ENCODE measurements at regions of chr13 and their contacts with region 1.

Region 1: DNA sequence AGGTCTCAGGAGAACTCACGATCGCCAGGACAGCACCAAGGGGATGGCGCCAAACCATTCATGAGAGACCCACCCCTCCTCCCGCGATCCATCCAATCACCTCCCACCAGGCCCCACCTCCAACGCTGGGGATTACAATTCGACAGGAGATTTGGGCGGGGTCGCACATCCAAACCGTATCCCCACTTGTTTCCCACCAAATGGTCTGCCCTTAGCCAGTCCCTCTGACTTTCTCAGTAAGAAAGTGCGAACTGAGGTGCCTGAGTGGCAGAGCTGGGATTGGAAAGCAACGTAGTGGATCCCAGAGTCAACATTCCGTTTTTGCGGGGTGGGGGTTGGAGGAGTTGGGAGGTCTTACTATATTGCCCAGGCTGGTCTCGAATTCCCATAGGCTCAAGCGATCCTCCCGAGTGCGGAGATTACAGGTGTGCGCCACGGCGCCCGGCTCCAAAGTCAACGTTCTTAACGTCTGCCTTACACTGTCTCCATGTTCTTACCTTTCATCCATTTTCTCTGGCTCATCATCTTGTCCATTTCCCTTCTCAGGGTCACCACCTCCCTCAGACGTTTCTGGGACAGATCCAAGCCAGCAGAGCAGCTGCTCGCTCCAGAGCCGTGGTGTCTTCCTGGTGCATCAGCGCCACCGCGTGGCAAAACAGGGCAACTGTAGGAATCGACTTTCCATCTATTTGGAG is 102.7 kb upstream of the ABCC4 start:
- DNase-seq: peak; percentile 88
- H3K4me3 Mint-ChIP-seq: peak overlapping the region; percentile 53
- H3K27ac Mint-ChIP-seq: no peak overlapping the region
- H3K4me1 Mint-ChIP-seq: peaks cover 6% of the 10 kb centered on the region
- H3K27me3 Mint-ChIP-seq: no peaks in the 10 kb centered on the region
- CTCF ChIP-seq: peak; percentile 99

Region 2: GRCh38 chr13:94620286-94620896 is 783.6 kb before region 1 on chr13:
- CTCF ChIA-PET with region 1: interaction called, 18 read pairs
- POLR2A ChIA-PET with region 1: no interaction called
- intact Hi-C with region 1: loop called (anchors 1 kb)
- DNase-seq: peak; percentile 60
- H3K4me3 Mint-ChIP-seq: no peak overlapping the region
- H3K27ac Mint-ChIP-seq: no peak overlapping the region
- H3K4me1 Mint-ChIP-seq: no peaks in the 10 kb centered on the region
- H3K27me3 Mint-ChIP-seq: no peaks in the 10 kb centered on the region
- CTCF ChIP-seq: peak; percentile 69

Region 3: DNA sequence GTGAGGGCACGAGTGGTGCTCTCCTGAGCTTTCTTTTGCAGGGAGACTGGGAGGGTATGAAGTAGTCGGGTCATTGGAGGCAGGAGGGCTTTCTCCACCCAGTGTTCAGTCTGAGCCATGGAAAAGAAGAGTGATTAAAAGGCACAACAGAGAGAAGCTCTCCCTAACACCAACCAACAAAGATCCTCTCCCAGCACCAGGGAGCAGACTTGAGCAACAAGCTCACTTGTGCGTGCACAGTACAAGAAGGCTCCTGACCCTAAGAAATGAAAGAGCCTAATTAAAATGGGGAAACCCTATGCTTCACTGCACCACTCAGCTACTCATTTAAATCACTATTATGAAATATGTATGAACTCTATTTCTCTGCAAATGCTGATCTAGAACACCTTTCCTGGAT is 415.3 kb before region 1 on chr13:
- CTCF ChIA-PET with region 1: no interaction called
- POLR2A ChIA-PET with region 1: no interaction called
- intact Hi-C with region 1: no loop called
- DNase-seq: peak; percentile 18
- H3K4me3 Mint-ChIP-seq: no peak overlapping the region
- H3K27ac Mint-ChIP-seq: no peak overlapping the region
- H3K4me1 Mint-ChIP-seq: no peaks in the 10 kb centered on the region
- H3K27me3 Mint-ChIP-seq: peaks cover 13% of the 10 kb centered on the region
- CTCF ChIP-seq: no peak

Region 4: DNA sequence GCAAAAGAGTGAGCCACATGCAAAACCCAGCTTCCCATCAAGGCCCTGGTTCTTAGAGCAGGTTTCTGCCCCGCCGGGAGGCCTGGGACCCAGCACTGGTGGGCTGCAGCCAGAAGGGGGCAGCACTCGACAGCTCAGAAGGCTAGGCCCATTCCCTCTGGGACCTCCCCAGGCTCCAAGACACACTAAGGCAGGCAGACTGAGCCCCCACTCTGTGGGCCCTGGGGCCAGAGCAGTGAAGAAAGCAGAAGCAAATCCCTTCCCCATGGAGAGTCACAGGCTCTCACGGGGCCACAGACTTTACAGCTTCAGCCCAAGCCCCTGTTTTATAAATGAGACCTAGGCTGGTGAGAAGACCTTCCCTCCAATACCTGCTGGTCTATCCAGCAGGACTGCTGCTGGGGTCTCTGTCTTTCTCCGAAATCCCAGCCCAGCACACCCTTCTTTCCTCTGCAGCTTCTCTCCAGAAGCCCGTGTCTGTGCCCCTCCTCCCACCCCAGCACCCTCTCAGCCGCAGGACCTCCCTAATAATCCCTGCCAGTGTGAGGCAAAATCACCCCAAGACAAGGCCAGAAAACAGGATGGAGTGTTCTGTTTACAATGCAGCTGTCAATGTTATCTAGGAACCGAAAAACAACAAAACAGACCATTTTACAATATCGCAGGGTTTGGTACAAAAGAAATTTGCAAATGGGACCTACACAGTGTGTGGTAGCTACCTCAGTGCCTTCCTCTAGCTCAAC is 212.0 kb before region 1 on chr13:
- CTCF ChIA-PET with region 1: interaction called, 327 read pairs
- POLR2A ChIA-PET with region 1: interaction called, 11 read pairs
- intact Hi-C with region 1: loop called (anchors 1 kb)
- DNase-seq: peak; percentile 68
- H3K4me3 Mint-ChIP-seq: no peak overlapping the region
- H3K27ac Mint-ChIP-seq: no peak overlapping the region
- H3K4me1 Mint-ChIP-seq: no peaks in the 10 kb centered on the region
- H3K27me3 Mint-ChIP-seq: no peaks in the 10 kb centered on the region
- CTCF ChIP-seq: peak; percentile 68

Region 5: GRCh38 chr13:95367309-95367843 is 36.6 kb before region 1 on chr13:
- CTCF ChIA-PET with region 1: interaction called, 11 read pairs
- POLR2A ChIA-PET with region 1: no interaction called
- intact Hi-C with region 1: no loop called
- DNase-seq: no peak
- H3K4me3 Mint-ChIP-seq: no peak overlapping the region
- H3K27ac Mint-ChIP-seq: no peak overlapping the region
- H3K4me1 Mint-ChIP-seq: no peaks in the 10 kb centered on the region
- H3K27me3 Mint-ChIP-seq: peaks cover 1% of the 10 kb centered on the region
- CTCF ChIP-seq: no peak

Region 6: DNA sequence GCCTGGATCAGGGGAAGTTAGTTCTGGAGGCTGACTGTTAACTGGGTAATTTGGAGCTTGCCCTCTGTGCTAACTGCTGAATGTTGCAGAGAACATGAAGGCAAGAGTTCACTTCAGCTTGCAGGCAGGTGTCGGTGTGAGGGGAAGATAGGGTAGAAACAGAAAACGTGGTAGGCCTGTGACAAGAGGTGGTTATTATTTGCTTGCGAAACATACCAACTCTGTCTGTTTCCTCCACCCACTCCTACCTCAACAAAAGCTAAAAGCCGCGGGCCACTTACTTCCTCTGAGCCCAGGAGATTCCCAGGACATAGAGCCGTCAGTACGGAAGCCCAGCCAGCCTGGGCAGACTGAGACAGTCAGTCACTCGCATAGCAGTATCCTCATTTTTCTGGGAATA is 16.5 kb after region 1 on chr13:
- CTCF ChIA-PET with region 1: interaction called, 104 read pairs
- POLR2A ChIA-PET with region 1: interaction called, 5 read pairs
- intact Hi-C with region 1: no loop called
- DNase-seq: peak; percentile 64
- H3K4me3 Mint-ChIP-seq: no peak overlapping the region
- H3K27ac Mint-ChIP-seq: no peak overlapping the region
- H3K4me1 Mint-ChIP-seq: peaks cover 5% of the 10 kb centered on the region
- H3K27me3 Mint-ChIP-seq: no peaks in the 10 kb centered on the region
- CTCF ChIP-seq: no peak

Region 7: DNA sequence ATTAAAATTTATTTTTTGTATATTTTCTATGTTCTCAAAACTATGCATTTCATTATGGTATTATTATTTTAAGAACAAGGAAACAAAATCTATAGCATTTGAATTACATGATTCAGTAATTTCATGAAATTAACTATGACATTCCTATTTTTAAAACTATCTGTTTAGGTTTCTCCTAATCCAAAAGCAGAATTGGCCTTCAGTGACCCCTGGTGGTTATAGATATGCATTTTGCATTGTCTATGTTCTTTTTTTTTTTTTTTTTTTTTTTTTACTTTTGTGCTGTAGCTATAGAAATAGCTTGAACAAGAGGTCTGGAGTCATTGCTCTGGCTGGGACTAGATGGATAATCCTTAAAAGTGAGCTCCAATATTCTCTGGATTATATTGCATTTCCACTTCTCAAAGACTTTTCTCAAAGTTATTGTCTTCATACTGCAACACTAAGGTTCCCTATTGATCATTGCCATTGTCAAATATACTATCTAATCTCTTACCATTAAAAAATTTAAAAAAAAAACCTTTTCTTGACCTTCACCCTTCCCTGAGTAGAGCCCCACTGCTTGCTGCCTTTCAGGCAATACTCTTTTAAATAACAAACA is 257.1 kb after region 1 on chr13:
- CTCF ChIA-PET with region 1: interaction called, 16 read pairs
- POLR2A ChIA-PET with region 1: no interaction called
- intact Hi-C with region 1: no loop called
- DNase-seq: peak; percentile 88
- H3K4me3 Mint-ChIP-seq: no peak overlapping the region
- H3K27ac Mint-ChIP-seq: no peak overlapping the region
- H3K4me1 Mint-ChIP-seq: no peaks in the 10 kb centered on the region
- H3K27me3 Mint-ChIP-seq: no peaks in the 10 kb centered on the region
- CTCF ChIP-seq: peak; percentile 59

Region 8: GRCh38 chr13:97109841-97110492 is 1706.0 kb after region 1 on chr13:
- CTCF ChIA-PET with region 1: interaction called, 8 read pairs
- POLR2A ChIA-PET with region 1: no interaction called
- intact Hi-C with region 1: loop called (anchors 5 kb)
- DNase-seq: peak; percentile 88
- H3K4me3 Mint-ChIP-seq: no peak overlapping the region
- H3K27ac Mint-ChIP-seq: no peak overlapping the region
- H3K4me1 Mint-ChIP-seq: peaks cover 6% of the 10 kb centered on the region
- H3K27me3 Mint-ChIP-seq: peaks cover 19% of the 10 kb centered on the region
- CTCF ChIP-seq: peak; percentile 99

Measured in MCF 10A (cell line).